Mammary epithelial cell (primary cell): ENCODE measurements at regions of chr6 and their contacts with region 1.

Region 1: GRCh38 chr6:11232193-11232769 is at the start of gene NEDD9:
- DNase-seq: peak; percentile 97
- H3K4me3 ChIP-seq: peak within 1 kb of the TSS; percentile 48 to 64 (median 54)
- H3K27ac ChIP-seq: peak within 1 kb of the TSS; percentile 97
- H3K4me1 ChIP-seq: peaks cover 39% of the 10 kb centered on the region
- H3K27me3 ChIP-seq: no peaks in the 10 kb centered on the region
- CTCF ChIP-seq: no peak
- total RNA-seq, gene NEDD9: 7.8 to 69.7 TPM

Region 2: GRCh38 chr6:10954590-10955010 is 277.7 kb before region 1 on chr6:
- CTCF ChIA-PET with region 1: no interaction called
- dilution Hi-C with region 1: no loop called
- in situ Hi-C with region 1: no loop called
- intact Hi-C with region 1: loop called (anchors 5 kb)
- DNase-seq: peak; percentile 48
- H3K4me3 ChIP-seq: no peak overlapping the region
- H3K27ac ChIP-seq: no peak overlapping the region
- H3K4me1 ChIP-seq: no peaks in the 10 kb centered on the region
- H3K27me3 ChIP-seq: peaks cover 1% of the 10 kb centered on the region
- CTCF ChIP-seq: peak; percentile 93 to 98

Region 3: GRCh38 chr6:11144393-11144851 is 87.9 kb before region 1 on chr6:
- CTCF ChIA-PET with region 1: no interaction called
- dilution Hi-C with region 1: loop called (anchors 5 kb)
- in situ Hi-C with region 1: no loop called
- intact Hi-C with region 1: loop called (anchors 1 kb)
- DNase-seq: peak; percentile 70
- H3K4me3 ChIP-seq: no peak overlapping the region
- H3K27ac ChIP-seq: peak overlapping the region; percentile 79
- H3K4me1 ChIP-seq: peaks cover 46% of the 10 kb centered on the region
- H3K27me3 ChIP-seq: no peaks in the 10 kb centered on the region
- CTCF ChIP-seq: peak; percentile 94 to 96

Region 4: GRCh38 chr6:11207199-11207968 is 24.9 kb before region 1 on chr6:
- CTCF ChIA-PET with region 1: no interaction called
- dilution Hi-C with region 1: no loop called
- in situ Hi-C with region 1: no loop called
- intact Hi-C with region 1: loop called (anchors 2 kb)
- DNase-seq: peak; percentile 99
- H3K4me3 ChIP-seq: no peak overlapping the region
- H3K27ac ChIP-seq: peak overlapping the region; percentile 99
- H3K4me1 ChIP-seq: peaks cover 36% of the 10 kb centered on the region
- H3K27me3 ChIP-seq: no peaks in the 10 kb centered on the region
- CTCF ChIP-seq: no peak

Region 5: GRCh38 chr6:11414176-11414963 is 182.1 kb after region 1 on chr6:
- CTCF ChIA-PET with region 1: no interaction called
- dilution Hi-C with region 1: no loop called
- in situ Hi-C with region 1: no loop called
- intact Hi-C with region 1: loop called (anchors 2 kb)
- DNase-seq: peak; percentile 93
- H3K4me3 ChIP-seq: peak overlapping the region in 1 of 3 experiments; percentile 26
- H3K27ac ChIP-seq: peak overlapping the region; percentile 96
- H3K4me1 ChIP-seq: peaks cover 4% of the 10 kb centered on the region
- H3K27me3 ChIP-seq: no peaks in the 10 kb centered on the region
- CTCF ChIP-seq: no peak